ENCODE measurements at regions of chr4 and their contacts with region 1.

Region 1: DNA sequence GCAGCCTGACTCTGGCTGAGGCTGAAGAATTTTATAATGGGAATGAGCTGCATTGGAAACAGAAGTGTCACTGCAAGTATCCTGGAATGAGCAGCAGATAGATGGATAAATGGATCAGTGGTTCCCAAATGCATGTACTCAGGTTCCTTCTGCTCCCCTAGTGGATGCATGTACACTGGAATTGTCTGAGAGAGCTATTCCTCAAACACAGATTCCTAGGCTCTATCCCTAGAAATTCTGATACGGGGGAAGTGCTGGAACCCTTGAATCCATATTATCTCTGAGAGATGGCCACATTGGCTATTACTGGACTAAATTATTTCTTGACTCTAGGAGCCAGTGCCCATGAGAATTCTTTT is 64.8 kb downstream of the TMEM131L start:
- DNase-seq: no peak
- H3K4me3 ChIP-seq: no peak overlapping the region
- H3K27ac ChIP-seq: no peak overlapping the region
- H3K4me1 ChIP-seq: peaks cover 25% of the 10 kb centered on the region
- H3K27me3 ChIP-seq: no peaks in the 10 kb centered on the region
- CTCF ChIP-seq: peak in 1 of 2 donors; percentile 1
- POLR2A ChIP-seq: no peak

Region 2: DNA sequence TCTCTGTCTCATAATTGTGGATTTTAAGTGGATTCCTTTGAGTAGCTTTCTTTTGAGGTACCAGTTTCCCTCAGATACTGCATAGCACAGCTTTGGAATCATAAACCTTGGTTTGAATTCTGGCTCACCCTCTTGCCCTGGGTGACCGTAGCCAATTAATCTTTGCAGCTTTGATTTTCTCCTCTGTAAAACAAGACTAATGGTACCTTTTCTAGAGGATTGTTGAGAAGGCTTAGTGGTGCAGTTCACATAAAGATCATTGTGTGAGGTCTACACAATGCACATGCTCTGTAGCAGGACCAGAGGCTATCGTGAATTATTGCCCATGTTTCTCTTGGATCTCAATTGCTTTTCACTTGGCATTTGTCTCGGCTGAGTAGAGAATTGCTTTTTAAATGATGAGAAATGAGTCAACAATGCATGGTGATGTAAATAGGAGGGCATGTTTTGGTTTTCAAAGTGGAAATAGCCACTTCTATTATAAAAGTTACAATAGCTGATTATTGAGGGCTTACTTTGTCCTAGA is 16.9 kb before region 1 on chr4:
- CTCF ChIA-PET with region 1: interaction called, 10 read pairs
- POLR2A ChIA-PET with region 1: no interaction called
- dilution Hi-C with region 1: no loop called
- intact Hi-C with region 1: loop called (anchors 2 kb)
- DNase-seq: peak; percentile 79
- H3K4me3 ChIP-seq: no peak overlapping the region
- H3K27ac ChIP-seq: peak overlapping the region; percentile 82
- H3K4me1 ChIP-seq: peaks cover 18% of the 10 kb centered on the region
- H3K27me3 ChIP-seq: no peaks in the 10 kb centered on the region
- CTCF ChIP-seq: no peak
- POLR2A ChIP-seq: no peak

Region 3: GRCh38 chr4:153566631-153567150 is 35.7 kb after region 1 on chr4:
- CTCF ChIA-PET with region 1: no interaction called
- POLR2A ChIA-PET with region 1: no interaction called
- dilution Hi-C with region 1: no loop called
- intact Hi-C with region 1: loop called (anchors 2 kb)
- DNase-seq: no peak
- H3K4me3 ChIP-seq: no peak overlapping the region
- H3K27ac ChIP-seq: no peak overlapping the region
- H3K4me1 ChIP-seq: no peaks in the 10 kb centered on the region
- H3K27me3 ChIP-seq: no peaks in the 10 kb centered on the region
- CTCF ChIP-seq: no peak
- POLR2A ChIP-seq: no peak

Measured in endothelial cell of umbilical vein (primary cell).